PC-3 (cell line): ENCODE measurements at regions of chr11 and their contacts with region 1.

Region 1: GRCh38 chr11:64284048-64284961 is at the start of gene BAD:
- DNase-seq: peak; percentile 97
- ATAC-seq: peak; percentile 89
- H3K4me3 ChIP-seq: peak within 1 kb of the TSS; percentile 73
- H3K27ac ChIP-seq: peak within 1 kb of the TSS; percentile 62
- H3K4me1 ChIP-seq: peaks cover 18% of the 10 kb centered on the region
- H3K27me3 ChIP-seq: no peaks in the 10 kb centered on the region
- CTCF ChIP-seq: no peak
- total RNA-seq, gene BAD: 360 and 368 TPM in 2 replicates

Region 2: GRCh38 chr11:64269380-64270234 is 14.7 kb before region 1 on chr11:
- CTCF ChIA-PET with region 1: no interaction called
- POLR2A ChIA-PET with region 1: interaction called, 3 read pairs
- intact Hi-C with region 1: loop called (anchors 2 kb)
- DNase-seq: peak; percentile 100
- ATAC-seq: peak; percentile 80
- H3K4me3 ChIP-seq: peak overlapping the region; percentile 69
- H3K27ac ChIP-seq: peak overlapping the region; percentile 83
- H3K4me1 ChIP-seq: peaks cover 35% of the 10 kb centered on the region
- H3K27me3 ChIP-seq: no peaks in the 10 kb centered on the region
- CTCF ChIP-seq: no peak